Mucosa of descending colon (tissue), 3 donors: ENCODE measurements at regions of chr6 and their contacts with region 1.

Region 1: DNA sequence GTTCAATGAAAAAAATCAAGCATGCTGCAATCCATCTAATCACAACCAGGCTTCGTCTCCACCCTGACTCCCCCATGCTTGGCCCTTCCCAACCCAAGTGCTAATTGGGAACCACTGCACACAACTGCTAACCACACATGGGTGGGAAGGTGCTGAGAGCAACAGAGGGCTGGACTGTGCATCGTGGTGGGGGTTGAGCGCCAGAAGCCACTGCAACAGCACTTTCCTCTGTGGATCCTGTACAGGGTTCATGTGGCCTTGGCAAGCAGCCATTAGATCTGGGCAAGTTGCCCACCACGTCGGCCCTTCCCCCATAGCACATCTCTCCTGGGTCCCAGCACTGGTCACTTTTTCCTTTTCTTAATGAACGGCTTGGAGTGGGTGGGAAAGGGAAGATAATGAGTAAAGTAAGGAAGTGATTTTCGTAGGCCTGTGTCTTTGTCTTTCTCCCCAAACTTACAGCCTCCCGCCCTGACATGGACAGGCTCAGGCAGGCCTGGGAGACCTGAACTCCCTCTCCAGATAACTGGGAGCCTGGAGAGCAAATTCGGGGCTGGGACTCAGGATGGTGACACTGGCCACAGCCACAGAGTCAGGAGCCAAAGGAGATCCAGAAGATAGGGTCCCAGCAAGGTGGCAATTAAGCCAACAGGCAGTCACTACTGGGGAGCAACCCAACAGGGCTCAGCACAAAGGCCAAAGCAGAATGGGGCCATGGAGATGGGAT is 34.4 kb upstream of the MRPS10 start:
- DNase-seq: peak; percentile 70 to 80 (median 71)
- ATAC-seq: peak; percentile 66
- H3K4me3 ChIP-seq: no peak overlapping the region
- H3K4me1 ChIP-seq: no peaks in the 10 kb centered on the region
- CTCF ChIP-seq: no peak

Region 2: GRCh38 chr6:42166444-42167141 is 85.5 kb before region 1 on chr6:
- intact Hi-C with region 1: no loop called
- DNase-seq: peak; percentile 63 to 86 (median 72)
- ATAC-seq: peak; percentile 94
- H3K4me3 ChIP-seq: no peak overlapping the region
- H3K4me1 ChIP-seq: no peaks in the 10 kb centered on the region
- CTCF ChIP-seq: peak; percentile 96

Region 3: GRCh38 chr6:42217157-42217518 is 34.9 kb before region 1 on chr6:
- intact Hi-C with region 1: no loop called
- DNase-seq: no peak
- ATAC-seq: no peak
- H3K4me3 ChIP-seq: peak overlapping the region; percentile 56
- H3K4me1 ChIP-seq: peaks cover 12% of the 10 kb centered on the region
- CTCF ChIP-seq: no peak

Region 4: DNA sequence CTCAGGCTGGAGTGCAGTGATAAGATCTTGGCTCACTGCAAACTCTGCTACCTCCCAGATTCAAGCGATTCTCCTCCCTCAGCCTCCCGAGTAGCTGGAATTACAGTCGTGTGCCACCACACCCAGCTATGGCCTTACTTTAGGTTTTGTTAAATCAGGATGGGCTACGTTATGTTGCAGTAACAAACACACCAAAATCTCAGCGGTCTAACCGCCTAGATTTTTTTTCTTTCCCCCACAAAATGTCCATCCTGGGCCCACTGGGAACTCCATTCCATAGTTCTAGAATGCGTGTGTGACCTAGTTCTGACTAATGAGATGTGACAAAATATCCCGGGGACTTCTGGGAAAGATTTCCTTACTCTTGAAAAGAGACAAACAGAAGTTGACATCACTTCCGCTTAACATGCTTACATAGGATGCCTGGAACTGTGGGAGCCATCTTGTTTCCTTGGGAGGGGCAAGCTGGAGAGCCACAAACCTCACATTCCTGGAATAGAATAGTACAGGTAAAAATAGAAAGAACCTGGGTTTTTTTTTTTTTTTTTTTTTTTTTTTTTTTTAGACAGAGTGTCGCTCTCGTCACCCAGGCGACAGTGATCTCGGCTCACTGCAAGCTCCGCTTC is 242.0 kb after region 1 on chr6:
- intact Hi-C with region 1: no loop called
- DNase-seq: no peak
- ATAC-seq: no peak
- H3K4me3 ChIP-seq: no peak overlapping the region
- H3K4me1 ChIP-seq: no peaks in the 10 kb centered on the region
- CTCF ChIP-seq: no peak

Region 5: GRCh38 chr6:42547407-42548329 is 295.6 kb after region 1 on chr6:
- intact Hi-C with region 1: loop called in 1 of 2 experiments (anchors 10 kb)
- DNase-seq: peak; percentile 86 to 92 (median 90)
- ATAC-seq: peak; percentile 100
- H3K4me3 ChIP-seq: no peak overlapping the region
- H3K4me1 ChIP-seq: peaks cover 8% of the 10 kb centered on the region
- CTCF ChIP-seq: peak; percentile 95

Region 6: DNA sequence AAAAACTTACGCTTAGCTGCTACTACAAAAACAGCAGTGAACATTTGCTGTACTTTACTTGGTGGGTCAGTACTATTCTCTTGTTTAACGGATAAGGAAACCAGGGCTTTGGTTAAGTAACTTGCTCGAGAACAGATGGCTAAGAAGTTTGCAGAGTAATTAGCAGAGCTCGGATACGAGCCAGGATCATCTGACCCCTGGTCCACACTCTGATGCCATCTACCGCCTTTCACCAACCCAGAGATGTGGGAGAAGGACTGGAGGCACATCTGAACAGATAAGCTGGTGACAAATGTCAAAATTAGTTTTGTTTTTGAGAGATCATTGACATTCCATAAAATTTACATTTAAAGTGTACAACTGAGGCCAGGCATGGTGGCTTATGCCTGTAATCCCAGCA is 608.4 kb after region 1 on chr6:
- intact Hi-C with region 1: no loop called
- DNase-seq: no peak
- ATAC-seq: no peak
- H3K4me3 ChIP-seq: no peak overlapping the region
- H3K4me1 ChIP-seq: no peaks in the 10 kb centered on the region
- CTCF ChIP-seq: no peak